Activated T-helper 2 cell treated with anti-CD3 and anti-CD28 coated beads, Interferon-gamma antibody, Interleukin-2, Interleukin-4, amounts not matched to agents 10 μg/mL and 5 μg/mL and 100 μg/mL, durations not matched to agents 14 hours and 24 hours and 36 hours (primary cell): ENCODE measurements at regions of chr16 and their contacts with region 1.

Region 1: GRCh38 chr16:31713071-31713944 is 160.3 kb upstream of the ZNF267 start:
- DNase-seq: peak; percentile 87
- H3K4me3 Mint-ChIP-seq: peak overlapping the region; percentile 98
- H3K27ac Mint-ChIP-seq: peak overlapping the region; percentile 99
- H3K4me1 Mint-ChIP-seq: peaks cover 31% of the 10 kb centered on the region
- H3K27me3 Mint-ChIP-seq: no peaks in the 10 kb centered on the region

Region 2: GRCh38 chr16:31507929-31508705 is 205.2 kb before region 1 on chr16 and contains the start of gene RUSF1:
- intact Hi-C with region 1: loop called (anchors 1 kb)
- DNase-seq: peak; percentile 80
- H3K4me3 Mint-ChIP-seq: peak within 1 kb of the TSS; percentile 94
- H3K27ac Mint-ChIP-seq: peak within 1 kb of the TSS; percentile 91
- H3K4me1 Mint-ChIP-seq: peaks cover 30% of the 10 kb centered on the region
- H3K27me3 Mint-ChIP-seq: no peaks in the 10 kb centered on the region
- total RNA-seq, gene RUSF1: 41.2 and 43.8 TPM in 2 replicates

Region 3: GRCh38 chr16:31695667-31696066 is 17.6 kb before region 1 on chr16:
- intact Hi-C with region 1: loop called (anchors 1 kb)
- DNase-seq: peak; percentile 64
- H3K4me3 Mint-ChIP-seq: no peak overlapping the region
- H3K27ac Mint-ChIP-seq: no peak overlapping the region
- H3K4me1 Mint-ChIP-seq: peaks cover 7% of the 10 kb centered on the region
- H3K27me3 Mint-ChIP-seq: peaks cover 20% of the 10 kb centered on the region

Region 4: DNA sequence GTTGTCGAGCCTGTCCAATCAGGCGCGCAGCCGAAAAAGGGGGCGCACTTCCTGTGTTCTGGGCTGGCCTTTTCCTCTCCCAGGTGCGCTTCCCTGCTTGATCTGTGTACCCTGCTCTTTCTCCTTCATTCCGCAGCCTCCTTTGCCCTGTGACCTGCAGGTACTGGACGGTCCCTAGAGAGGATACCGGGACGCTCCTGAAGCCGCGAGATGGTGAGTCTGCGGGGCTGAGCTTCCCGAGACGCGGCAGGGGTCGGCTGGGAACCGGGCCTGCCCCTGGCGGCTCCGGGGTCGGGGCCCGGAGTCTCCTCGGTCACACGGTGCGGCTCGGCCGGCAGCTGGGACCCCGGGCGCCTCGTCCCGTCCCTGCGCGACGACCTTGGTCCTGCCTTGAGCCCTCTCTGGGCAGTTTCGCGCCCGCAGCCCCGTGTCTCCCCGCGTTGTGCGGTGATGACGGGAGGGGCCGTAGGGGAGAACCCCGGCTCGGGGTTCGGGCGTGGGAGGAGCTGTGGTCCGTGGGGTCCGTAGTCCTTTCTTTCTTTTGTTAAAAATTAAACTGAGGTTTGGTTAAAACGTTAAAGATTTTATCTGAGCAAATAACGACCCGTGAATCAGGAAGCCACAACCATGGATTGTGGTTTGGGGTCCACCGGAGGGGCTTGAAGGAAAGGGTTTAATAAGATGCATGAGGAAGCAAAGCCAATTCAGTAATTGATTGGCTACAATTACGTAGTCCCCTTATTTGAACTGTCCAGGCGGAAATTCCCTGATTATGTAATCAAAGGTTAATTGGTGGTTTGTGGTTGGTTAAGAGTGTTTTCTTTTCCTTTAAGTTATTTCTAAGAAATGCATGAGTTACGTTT is 12.6 kb before region 1 on chr16:
- intact Hi-C with region 1: loop called (anchors 1 kb)
- DNase-seq: peak; percentile 68
- H3K4me3 Mint-ChIP-seq: peak overlapping the region; percentile 85
- H3K27ac Mint-ChIP-seq: peak overlapping the region; percentile 89
- H3K4me1 Mint-ChIP-seq: peaks cover 26% of the 10 kb centered on the region
- H3K27me3 Mint-ChIP-seq: peaks cover 20% of the 10 kb centered on the region

Region 5: GRCh38 chr16:31734265-31734664 is 21.0 kb after region 1 on chr16:
- intact Hi-C with region 1: no loop called
- DNase-seq: no peak
- H3K4me3 Mint-ChIP-seq: no peak overlapping the region
- H3K27ac Mint-ChIP-seq: no peak overlapping the region
- H3K4me1 Mint-ChIP-seq: no peaks in the 10 kb centered on the region
- H3K27me3 Mint-ChIP-seq: no peaks in the 10 kb centered on the region

Region 6: DNA sequence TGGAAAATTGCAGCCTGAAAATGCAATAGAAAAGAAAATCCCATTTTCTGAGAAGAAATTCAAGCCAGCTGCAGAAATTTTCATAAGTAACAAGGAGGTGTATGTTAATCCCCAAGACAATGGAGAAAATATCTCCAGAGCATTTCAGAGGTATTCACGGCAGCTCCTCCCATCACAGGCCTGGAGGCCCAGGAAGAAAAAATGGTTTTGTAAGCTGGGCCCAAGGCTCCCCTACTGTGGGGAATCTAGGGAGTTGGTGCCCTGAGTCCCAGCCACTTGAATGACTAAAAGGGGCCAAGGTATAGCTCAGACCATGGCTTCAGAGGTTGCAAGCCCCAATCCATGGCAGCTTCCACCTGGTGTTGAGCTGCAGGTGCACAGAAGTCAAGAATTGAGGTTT is 67.0 kb after region 1 on chr16:
- intact Hi-C with region 1: no loop called
- DNase-seq: no peak
- H3K4me3 Mint-ChIP-seq: no peak overlapping the region
- H3K27ac Mint-ChIP-seq: no peak overlapping the region
- H3K4me1 Mint-ChIP-seq: no peaks in the 10 kb centered on the region
- H3K27me3 Mint-ChIP-seq: no peaks in the 10 kb centered on the region